Activated naive CD4-positive, alpha-beta T cell treated with anti-CD3 and anti-CD28 coated beads for 36 hours (primary cell): ENCODE measurements at regions of chr2 and their contacts with region 1.

Region 1: DNA sequence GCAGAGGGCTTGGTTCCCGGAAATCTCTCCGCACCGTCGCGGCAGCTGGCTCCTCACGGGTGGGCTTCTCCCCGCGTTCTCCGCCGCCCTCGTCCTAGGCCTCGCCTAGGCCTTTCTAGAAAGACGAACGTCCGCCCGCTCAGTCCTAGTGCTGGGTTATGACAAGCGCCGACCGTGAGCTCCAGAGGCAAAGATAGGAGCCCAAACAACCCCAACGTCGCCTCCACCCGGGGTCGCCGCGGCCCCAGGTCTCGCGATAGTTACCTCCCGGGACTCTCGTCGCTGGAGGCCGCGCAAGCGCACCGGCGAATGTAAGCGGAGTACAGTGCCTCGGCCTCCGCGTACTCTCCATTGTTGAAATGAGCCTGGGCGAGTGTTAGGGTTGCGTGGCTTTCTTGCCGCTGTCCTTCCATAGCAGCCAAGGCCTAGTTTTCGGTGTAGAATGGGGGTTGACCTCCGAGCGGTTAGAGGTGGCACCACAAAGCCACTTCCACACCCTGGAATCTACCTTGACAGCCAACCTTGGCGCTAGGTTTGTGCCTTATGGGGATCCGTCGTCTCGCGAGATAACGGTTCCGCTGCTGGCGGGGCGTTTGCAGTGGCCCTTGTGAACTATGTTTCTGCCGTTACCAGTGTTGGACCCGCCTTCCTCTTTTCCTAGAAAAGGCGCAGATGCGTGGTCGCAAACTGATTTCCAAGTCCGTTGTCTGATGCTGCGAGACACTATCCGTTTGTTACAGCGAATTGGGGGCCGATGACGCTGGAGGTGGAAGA is at the start of gene TTC32:
- DNase-seq: peak; percentile 96
- H3K4me3 Mint-ChIP-seq: peak within 1 kb of the TSS; percentile 81
- H3K27ac Mint-ChIP-seq: peak within 1 kb of the TSS; percentile 99
- H3K4me1 Mint-ChIP-seq: peaks cover 42% of the 10 kb centered on the region
- H3K27me3 Mint-ChIP-seq: peaks cover 10% of the 10 kb centered on the region
- total RNA-seq, gene TTC32: 17.0 to 19.4 TPM

Region 2: DNA sequence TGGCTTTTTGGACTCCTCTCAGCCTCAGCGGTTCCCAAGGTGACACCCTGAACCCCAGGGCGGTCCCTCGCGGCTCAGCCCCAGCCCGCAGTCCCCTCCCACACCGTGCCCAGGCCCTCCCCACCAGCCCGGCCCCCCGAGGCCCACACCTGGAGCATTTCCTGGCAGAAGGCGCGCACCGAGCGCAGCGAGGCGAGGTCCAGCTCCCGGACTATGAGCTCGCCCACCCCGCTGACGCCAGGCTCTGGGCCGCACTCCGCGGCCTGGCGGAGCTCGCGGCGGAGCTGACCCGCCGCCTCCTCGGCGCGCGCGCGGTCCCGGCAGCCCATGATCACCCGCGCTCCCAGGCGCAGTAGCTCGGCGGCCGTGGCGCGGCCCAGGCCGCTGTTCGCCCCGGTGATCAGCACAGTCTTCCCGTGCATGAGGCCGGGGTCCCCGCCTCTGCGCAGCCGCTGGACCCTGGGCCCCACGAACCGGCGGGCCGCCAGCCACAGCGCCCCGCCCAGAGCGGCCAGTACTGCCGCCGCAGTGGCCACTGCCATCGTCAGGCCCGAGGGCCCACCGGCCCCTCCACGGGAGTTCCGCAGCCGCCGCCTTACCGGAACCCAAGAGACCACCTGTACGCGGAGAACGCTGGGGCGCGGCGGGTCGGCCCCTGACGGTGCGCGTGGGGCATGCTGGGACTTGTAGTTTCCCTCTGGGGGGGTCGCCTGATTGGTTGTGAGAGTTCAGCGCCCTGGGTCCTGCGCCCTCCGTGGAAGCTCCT is 1341.4 kb before region 1 on chr2 and contains the start of gene RDH14:
- CTCF ChIA-PET with region 1: no interaction called
- intact Hi-C with region 1: loop called (anchors 1 kb)
- DNase-seq: peak; percentile 94
- H3K4me3 Mint-ChIP-seq: peak within 1 kb of the TSS; percentile 84
- H3K27ac Mint-ChIP-seq: peak within 1 kb of the TSS; percentile 89
- H3K4me1 Mint-ChIP-seq: peaks cover 35% of the 10 kb centered on the region
- H3K27me3 Mint-ChIP-seq: no peaks in the 10 kb centered on the region
- total RNA-seq, gene RDH14: 11.4 to 11.6 TPM

Region 3: DNA sequence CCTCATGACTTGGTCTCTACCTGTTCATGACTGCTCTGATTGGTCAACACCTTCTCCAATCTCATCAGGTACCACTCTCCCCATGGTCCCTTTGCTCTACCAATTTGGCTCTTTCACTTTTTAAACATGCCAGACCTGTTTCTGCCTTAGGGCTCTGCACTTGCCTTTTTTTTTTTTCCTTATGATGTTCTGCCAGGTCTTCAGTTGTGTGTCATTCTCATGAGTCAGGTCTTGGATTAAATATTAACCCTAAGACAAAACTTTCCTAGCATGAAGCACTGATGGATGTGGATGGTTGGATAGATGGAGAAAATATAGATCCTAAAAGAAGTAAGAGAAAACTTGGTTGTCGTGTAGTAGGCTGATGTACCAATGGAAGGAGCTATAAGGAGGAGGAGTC is 219.1 kb before region 1 on chr2:
- CTCF ChIA-PET with region 1: no interaction called
- intact Hi-C with region 1: no loop called
- DNase-seq: no peak
- H3K4me3 Mint-ChIP-seq: no peak overlapping the region
- H3K27ac Mint-ChIP-seq: no peak overlapping the region
- H3K4me1 Mint-ChIP-seq: no peaks in the 10 kb centered on the region
- H3K27me3 Mint-ChIP-seq: peaks cover under 1% of the 10 kb centered on the region

Region 4: DNA sequence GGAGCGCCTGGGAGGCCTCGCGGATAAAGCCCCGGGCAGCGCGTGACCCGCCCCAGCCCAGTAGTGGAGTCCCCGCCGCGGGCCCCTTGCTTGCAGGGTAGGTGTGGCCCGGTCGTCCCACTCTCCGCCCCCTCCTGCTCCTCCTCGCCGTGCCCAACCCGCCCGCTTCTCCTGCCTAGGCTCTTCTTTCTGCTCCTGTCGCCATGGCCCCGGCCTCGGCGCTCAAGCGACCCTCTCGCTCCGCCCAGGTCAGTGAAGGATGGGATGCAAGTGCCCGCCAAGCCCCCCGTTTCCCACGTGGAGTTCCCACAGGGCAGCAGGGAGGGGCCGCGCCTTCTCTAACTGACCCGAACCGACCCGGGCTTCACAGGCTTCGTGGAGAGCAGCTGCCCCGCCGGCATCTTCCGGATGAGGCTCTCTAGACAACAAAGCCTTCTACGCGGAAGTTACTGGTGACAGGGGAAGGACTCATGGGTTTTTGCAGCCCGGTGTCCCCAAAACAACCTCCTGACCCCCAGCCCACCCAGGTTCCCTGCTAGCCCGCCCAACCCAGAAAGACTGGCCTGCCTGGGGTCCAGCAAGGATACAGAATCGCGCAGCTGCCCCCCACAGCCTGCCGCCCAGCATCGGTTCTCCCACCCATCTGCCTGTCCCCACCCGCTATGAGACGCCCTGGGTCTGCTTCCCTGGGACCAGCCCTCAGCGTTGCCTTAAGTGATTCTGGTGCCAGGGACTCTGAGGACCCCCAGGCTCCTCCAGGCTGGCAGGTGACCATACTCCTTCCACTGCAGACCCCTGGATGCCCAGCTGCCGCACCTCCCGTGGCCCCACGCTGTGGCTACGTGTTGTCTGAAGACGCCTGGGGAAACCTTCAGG is 32.7 kb before region 1 on chr2:
- CTCF ChIA-PET with region 1: interaction called, 4 read pairs
- intact Hi-C with region 1: loop called (anchors 1 kb)
- DNase-seq: peak; percentile 67
- H3K4me3 Mint-ChIP-seq: peak overlapping the region; percentile 83
- H3K27ac Mint-ChIP-seq: peak overlapping the region; percentile 47
- H3K4me1 Mint-ChIP-seq: peaks cover 22% of the 10 kb centered on the region
- H3K27me3 Mint-ChIP-seq: no peaks in the 10 kb centered on the region

Region 5: GRCh38 chr2:19989681-19990415 is 88.2 kb after region 1 on chr2 and contains the start of gene WDR35:
- CTCF ChIA-PET with region 1: no interaction called
- intact Hi-C with region 1: loop called (anchors 1 kb)
- DNase-seq: peak; percentile 91
- H3K4me3 Mint-ChIP-seq: peak within 1 kb of the TSS; percentile 87
- H3K27ac Mint-ChIP-seq: peak within 1 kb of the TSS; percentile 54
- H3K4me1 Mint-ChIP-seq: peaks cover 28% of the 10 kb centered on the region
- H3K27me3 Mint-ChIP-seq: peaks cover 13% of the 10 kb centered on the region
- total RNA-seq, gene WDR35: 4.3 to 4.4 TPM

Region 6: GRCh38 chr2:20097879-20098714 is 196.5 kb after region 1 on chr2:
- CTCF ChIA-PET with region 1: no interaction called
- intact Hi-C with region 1: loop called (anchors 1 kb)
- DNase-seq: peak; percentile 88
- H3K4me3 Mint-ChIP-seq: no peak overlapping the region
- H3K27ac Mint-ChIP-seq: no peak overlapping the region
- H3K4me1 Mint-ChIP-seq: peaks cover 3% of the 10 kb centered on the region
- H3K27me3 Mint-ChIP-seq: peaks cover 10% of the 10 kb centered on the region

Region 7: GRCh38 chr2:20365249-20365817 is 463.7 kb after region 1 on chr2:
- CTCF ChIA-PET with region 1: no interaction called
- intact Hi-C with region 1: loop called (anchors 5 kb)
- DNase-seq: peak; percentile 84
- H3K4me3 Mint-ChIP-seq: no peak overlapping the region
- H3K27ac Mint-ChIP-seq: peak overlapping the region; percentile 54
- H3K4me1 Mint-ChIP-seq: peaks cover 25% of the 10 kb centered on the region
- H3K27me3 Mint-ChIP-seq: peaks cover 11% of the 10 kb centered on the region

Region 8: DNA sequence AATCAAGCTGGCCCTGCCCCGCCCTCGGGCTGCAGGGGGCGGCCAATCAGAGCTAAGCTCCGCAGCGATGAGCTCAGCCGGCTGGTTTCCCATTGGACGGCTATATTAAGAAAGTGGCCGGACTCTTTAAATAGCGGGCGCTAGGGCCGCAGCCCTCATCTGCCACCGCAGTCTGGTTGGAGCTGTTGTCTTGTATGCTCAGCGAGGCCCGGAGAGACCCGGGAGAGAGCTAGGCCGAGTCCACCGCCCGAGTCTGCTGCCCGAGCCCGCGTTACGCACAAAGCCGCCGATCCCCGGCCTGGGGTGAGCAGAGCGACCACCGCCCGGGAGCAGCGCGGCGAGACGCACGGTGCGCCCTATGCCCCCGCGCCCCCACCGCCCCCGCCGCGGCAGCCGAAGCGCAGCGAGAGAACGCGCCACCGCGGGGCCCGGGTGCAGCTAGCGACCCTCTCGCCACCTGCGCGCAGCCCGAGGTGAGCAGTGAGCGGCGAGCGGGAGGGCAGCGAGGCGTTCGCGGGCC is 545.3 kb after region 1 on chr2 and contains the start of gene RHOB:
- CTCF ChIA-PET with region 1: no interaction called
- intact Hi-C with region 1: loop called (anchors 2 kb)
- DNase-seq: peak; percentile 91
- H3K4me3 Mint-ChIP-seq: peak within 1 kb of the TSS; percentile 76
- H3K27ac Mint-ChIP-seq: no peak within 1 kb of the TSS
- H3K4me1 Mint-ChIP-seq: peaks cover 11% of the 10 kb centered on the region
- H3K27me3 Mint-ChIP-seq: peaks cover 3% of the 10 kb centered on the region
- total RNA-seq, gene RHOB: 1.8 to 2.0 TPM